ENCODE measurements at regions of chr1 and their contacts with region 1.

Region 1: GRCh38 chr1:201374364-201374763 is 3.1 kb downstream of the TNNT2 start:
- DNase-seq: no peak
- ATAC-seq: peak; percentile 6

Region 2: DNA sequence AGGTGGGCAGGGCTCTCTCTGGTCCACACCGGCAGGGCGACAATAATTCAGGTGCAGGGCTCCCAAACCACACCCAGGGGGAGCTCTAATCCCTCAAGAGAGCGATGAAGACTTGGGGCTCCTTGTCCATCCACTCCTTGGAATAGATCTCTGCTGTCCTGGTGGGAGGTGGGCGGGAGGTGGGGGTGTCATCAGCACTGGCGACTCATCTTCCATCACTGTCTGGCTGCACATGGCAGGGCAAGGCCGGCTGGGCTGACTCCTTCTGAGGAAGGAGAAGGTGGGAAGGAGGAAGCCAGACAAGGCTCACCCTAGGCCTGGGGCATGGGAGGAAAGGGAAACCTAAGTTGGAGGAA is 26.2 kb before region 1 on chr1:
- intact Hi-C with region 1: no loop called
- DNase-seq: no peak
- ATAC-seq: peak; percentile 37

Region 3: GRCh38 chr1:201408176-201408833 is 33.9 kb after region 1 on chr1:
- intact Hi-C with region 1: loop called (anchors 5 kb)
- DNase-seq: peak; percentile 83
- ATAC-seq: peak; percentile 89